B cell (primary cell): ENCODE measurements at regions of chr21 and their contacts with region 1.

Region 1: GRCh38 chr21:44011980-44012527 is at the start of gene TRAPPC10:
- DNase-seq: peak; percentile 90
- ATAC-seq: peak; percentile 63
- H3K4me3 ChIP-seq: peak within 1 kb of the TSS; percentile 53 to 86 (median 75)
- H3K4me3 Mint-ChIP-seq: peak within 1 kb of the TSS; percentile 92
- H3K27ac ChIP-seq: peak within 1 kb of the TSS; percentile 76 to 92
- H3K27ac Mint-ChIP-seq: peak within 1 kb of the TSS; percentile 95
- H3K4me1 ChIP-seq: peaks cover 35 to 42% of the 10 kb centered on the region in 2 donors
- H3K4me1 Mint-ChIP-seq: peaks cover 40% of the 10 kb centered on the region
- H3K27me3 ChIP-seq: no peaks in the 10 kb centered on the region
- H3K27me3 Mint-ChIP-seq: no peaks in the 10 kb centered on the region
- CTCF ChIP-seq: no peak
- total RNA-seq, gene TRAPPC10: 145 and 153 TPM in 2 replicates

Region 2: GRCh38 chr21:42892931-42893755 is 1118.9 kb before region 1 on chr21 and contains the start of gene NDUFV3:
- CTCF ChIA-PET with region 1: no interaction called
- POLR2A ChIA-PET with region 1: no interaction called
- intact Hi-C with region 1: loop called (anchors 5 kb)
- DNase-seq: peak; percentile 100
- ATAC-seq: peak; percentile 97
- H3K4me3 ChIP-seq: peak within 1 kb of the TSS; percentile 68 to 83 (median 70)
- H3K4me3 Mint-ChIP-seq: peak within 1 kb of the TSS; percentile 94
- H3K27ac ChIP-seq: peak within 1 kb of the TSS; percentile 80 to 96
- H3K27ac Mint-ChIP-seq: peak within 1 kb of the TSS; percentile 95
- H3K4me1 ChIP-seq: peaks cover 7 to 11% of the 10 kb centered on the region in 2 donors
- H3K4me1 Mint-ChIP-seq: peaks cover 10% of the 10 kb centered on the region
- H3K27me3 ChIP-seq: no peaks in the 10 kb centered on the region
- H3K27me3 Mint-ChIP-seq: no peaks in the 10 kb centered on the region
- CTCF ChIP-seq: no peak
- total RNA-seq, gene NDUFV3: 29.7 and 30.8 TPM in 2 replicates

Region 3: DNA sequence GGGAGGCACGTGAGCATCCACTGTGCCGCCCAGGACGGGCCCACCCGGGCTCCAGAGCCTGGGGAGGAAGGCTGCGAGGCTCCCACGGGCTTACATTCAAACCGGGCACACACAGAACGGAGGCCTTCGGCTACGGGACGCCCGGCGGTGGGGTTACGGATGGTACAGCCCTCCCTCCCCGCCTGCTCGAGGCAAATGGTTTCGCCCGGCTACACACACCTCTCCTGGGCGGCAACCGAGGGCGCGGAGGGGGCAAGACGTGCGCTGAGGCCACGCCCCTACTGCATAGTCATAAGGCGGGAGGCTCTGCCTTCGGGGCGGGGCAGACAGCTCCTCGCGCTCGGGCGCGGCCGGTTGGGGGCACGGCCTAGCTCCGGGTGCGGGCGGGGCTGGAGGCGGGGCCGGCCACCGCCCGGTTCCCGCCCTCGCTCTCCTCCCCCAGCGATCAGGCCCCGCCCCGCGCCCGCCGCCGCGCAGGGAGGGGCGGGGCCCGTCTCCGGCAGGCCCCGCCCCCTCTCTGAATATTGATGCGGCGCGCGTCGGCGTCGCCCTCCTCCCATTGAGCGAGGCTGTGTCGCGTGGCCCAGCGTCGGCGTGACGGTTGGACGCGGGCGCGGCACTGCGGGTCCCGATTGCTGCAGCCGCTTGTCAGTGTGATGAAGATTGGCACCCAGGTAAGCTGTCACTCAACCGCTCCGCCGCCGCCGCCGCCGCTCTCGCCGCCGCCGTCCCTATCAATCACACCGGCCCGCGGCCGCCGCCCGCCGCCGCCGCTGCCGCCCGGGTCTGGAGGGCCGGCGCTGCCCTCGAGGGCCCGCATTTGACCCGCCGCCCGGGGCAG is 1037.8 kb before region 1 on chr21 and contains the start of gene PKNOX1:
- CTCF ChIA-PET with region 1: no interaction called
- POLR2A ChIA-PET with region 1: no interaction called
- intact Hi-C with region 1: loop called (anchors 5 kb)
- DNase-seq: peak; percentile 100
- ATAC-seq: peak; percentile 84
- H3K4me3 ChIP-seq: peak within 1 kb of the TSS; percentile 39 to 84 (median 69)
- H3K4me3 Mint-ChIP-seq: peak within 1 kb of the TSS; percentile 92
- H3K27ac ChIP-seq: peak within 1 kb of the TSS; percentile 76 to 87
- H3K27ac Mint-ChIP-seq: peak within 1 kb of the TSS; percentile 98
- H3K4me1 ChIP-seq: peaks cover 14 to 18% of the 10 kb centered on the region in 2 donors
- H3K4me1 Mint-ChIP-seq: peaks cover 19% of the 10 kb centered on the region
- H3K27me3 ChIP-seq: no peaks in the 10 kb centered on the region
- H3K27me3 Mint-ChIP-seq: no peaks in the 10 kb centered on the region
- CTCF ChIP-seq: no peak
- total RNA-seq, gene PKNOX1: 25.3 and 29.5 TPM in 2 replicates

Region 4: DNA sequence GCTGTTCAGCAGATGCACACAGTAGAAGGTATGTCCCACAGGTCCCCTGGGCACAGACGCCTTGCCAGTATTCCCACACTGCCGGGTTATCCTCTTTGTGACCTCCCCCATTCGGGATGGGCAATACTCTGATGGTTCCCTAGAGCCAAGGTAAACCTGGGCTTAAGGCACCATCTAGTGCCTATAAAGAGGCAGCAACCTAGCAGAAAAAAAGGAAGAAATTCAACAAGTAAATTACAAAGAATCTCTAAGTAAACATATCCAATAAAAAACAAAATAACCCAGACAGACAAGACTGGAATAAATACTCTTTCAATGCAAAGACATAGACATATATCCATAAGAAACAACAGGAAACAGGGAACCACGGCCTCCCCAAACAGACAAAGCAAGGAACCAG is 392.2 kb before region 1 on chr21:
- CTCF ChIA-PET with region 1: no interaction called
- POLR2A ChIA-PET with region 1: no interaction called
- intact Hi-C with region 1: no loop called
- DNase-seq: no peak
- ATAC-seq: no peak
- H3K4me3 ChIP-seq: no peak overlapping the region
- H3K4me3 Mint-ChIP-seq: no peak overlapping the region
- H3K27ac ChIP-seq: no peak overlapping the region
- H3K27ac Mint-ChIP-seq: no peak overlapping the region
- H3K4me1 ChIP-seq: peaks cover 5% of the 10 kb centered on the region in 2 donors
- H3K4me1 Mint-ChIP-seq: peaks cover 20% of the 10 kb centered on the region
- H3K27me3 ChIP-seq: no peaks in the 10 kb centered on the region
- H3K27me3 Mint-ChIP-seq: peaks cover 5% of the 10 kb centered on the region
- CTCF ChIP-seq: no peak

Region 5: DNA sequence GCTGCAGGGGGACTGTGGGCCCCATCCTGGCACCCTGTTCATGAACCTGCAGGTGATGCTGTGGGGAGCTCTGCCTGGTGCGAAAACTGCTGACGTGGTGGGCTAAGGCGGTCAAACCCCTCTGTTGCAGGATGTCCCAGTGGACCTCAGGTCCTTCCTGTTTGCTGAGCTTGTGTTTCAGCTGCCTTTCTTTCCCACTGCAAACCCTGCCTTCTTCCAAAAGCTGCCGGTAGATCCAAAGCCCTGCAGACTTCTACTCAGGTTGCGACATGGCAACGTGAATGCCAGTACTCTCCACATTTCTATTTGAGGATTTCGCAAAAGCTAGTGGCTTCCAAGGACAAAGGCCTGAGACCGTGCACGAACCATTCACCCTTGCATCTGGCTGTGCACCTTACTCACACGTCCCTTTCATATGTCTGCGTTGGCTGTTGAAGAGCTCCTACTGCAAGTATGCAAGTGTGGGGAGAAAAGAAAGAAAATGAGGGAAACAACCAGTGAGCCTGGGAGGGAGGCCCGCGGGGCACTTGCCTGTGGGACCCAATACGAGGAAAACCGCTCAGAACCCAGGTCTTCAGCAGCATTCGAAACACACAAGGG is 228.9 kb before region 1 on chr21:
- CTCF ChIA-PET with region 1: no interaction called
- POLR2A ChIA-PET with region 1: no interaction called
- intact Hi-C with region 1: no loop called
- DNase-seq: no peak
- ATAC-seq: no peak
- H3K4me3 ChIP-seq: no peak overlapping the region
- H3K4me3 Mint-ChIP-seq: no peak overlapping the region
- H3K27ac ChIP-seq: no peak overlapping the region
- H3K27ac Mint-ChIP-seq: no peak overlapping the region
- H3K4me1 ChIP-seq: peaks cover 3 to 6% of the 10 kb centered on the region in 2 donors
- H3K4me1 Mint-ChIP-seq: peaks cover 6% of the 10 kb centered on the region
- H3K27me3 ChIP-seq: no peaks in the 10 kb centered on the region
- H3K27me3 Mint-ChIP-seq: no peaks in the 10 kb centered on the region
- CTCF ChIP-seq: no peak

Region 6: DNA sequence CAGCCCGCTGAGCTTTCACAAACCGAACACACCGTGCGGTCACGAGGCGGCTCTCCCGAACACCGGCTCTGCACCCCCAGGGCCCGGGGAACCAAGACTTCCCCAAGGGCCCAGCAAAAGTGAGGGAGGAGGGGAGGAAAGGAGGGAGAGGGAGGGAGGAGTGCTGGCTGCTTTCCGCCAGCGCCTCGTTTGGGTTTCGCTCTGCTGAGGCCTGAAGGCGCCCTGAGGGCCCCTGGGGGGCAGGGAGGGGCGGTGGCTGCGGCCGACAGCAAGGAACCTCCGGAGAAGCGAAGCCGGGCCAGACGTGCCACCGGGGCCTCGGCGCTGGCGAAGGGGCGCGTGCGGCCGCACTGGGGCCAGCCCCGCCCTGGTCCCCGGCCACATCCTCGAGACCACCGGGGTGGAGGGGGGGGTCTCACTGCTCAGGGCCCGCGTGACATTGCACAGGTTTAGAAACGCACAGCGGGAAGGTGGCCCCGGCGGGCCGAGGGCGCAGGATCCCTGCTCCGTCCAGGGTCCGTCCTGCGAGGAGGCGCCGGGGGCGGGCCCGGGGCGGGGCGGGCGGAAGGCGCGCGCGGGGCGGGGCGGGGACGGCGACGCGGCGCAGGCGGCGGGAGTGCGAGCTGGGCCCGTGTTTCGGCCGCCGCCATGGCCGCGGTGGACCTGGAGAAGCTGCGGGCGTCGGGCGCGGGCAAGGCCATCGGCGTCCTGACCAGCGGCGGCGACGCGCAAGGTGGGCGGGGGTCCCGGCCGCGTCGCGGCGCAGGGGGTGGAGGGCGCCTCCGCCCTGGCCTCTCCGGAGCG is 287.6 kb after region 1 on chr21 and contains the start of gene PFKL:
- CTCF ChIA-PET with region 1: interaction called, 11 read pairs
- POLR2A ChIA-PET with region 1: interaction called, 9 read pairs
- intact Hi-C with region 1: loop called (anchors 10 kb)
- DNase-seq: peak; percentile 90
- ATAC-seq: peak; percentile 72
- H3K4me3 ChIP-seq: peak within 1 kb of the TSS; percentile 0 to 82 (median 72)
- H3K4me3 Mint-ChIP-seq: peak within 1 kb of the TSS; percentile 91
- H3K27ac ChIP-seq: peak within 1 kb of the TSS; percentile 91 to 94
- H3K27ac Mint-ChIP-seq: peak within 1 kb of the TSS; percentile 97
- H3K4me1 ChIP-seq: peaks cover 72 to 88% of the 10 kb centered on the region in 2 donors
- H3K4me1 Mint-ChIP-seq: peaks cover 67% of the 10 kb centered on the region
- H3K27me3 ChIP-seq: no peaks in the 10 kb centered on the region
- H3K27me3 Mint-ChIP-seq: no peaks in the 10 kb centered on the region
- CTCF ChIP-seq: no peak
- total RNA-seq, gene PFKL: 318 and 329 TPM in 2 replicates

Region 7: DNA sequence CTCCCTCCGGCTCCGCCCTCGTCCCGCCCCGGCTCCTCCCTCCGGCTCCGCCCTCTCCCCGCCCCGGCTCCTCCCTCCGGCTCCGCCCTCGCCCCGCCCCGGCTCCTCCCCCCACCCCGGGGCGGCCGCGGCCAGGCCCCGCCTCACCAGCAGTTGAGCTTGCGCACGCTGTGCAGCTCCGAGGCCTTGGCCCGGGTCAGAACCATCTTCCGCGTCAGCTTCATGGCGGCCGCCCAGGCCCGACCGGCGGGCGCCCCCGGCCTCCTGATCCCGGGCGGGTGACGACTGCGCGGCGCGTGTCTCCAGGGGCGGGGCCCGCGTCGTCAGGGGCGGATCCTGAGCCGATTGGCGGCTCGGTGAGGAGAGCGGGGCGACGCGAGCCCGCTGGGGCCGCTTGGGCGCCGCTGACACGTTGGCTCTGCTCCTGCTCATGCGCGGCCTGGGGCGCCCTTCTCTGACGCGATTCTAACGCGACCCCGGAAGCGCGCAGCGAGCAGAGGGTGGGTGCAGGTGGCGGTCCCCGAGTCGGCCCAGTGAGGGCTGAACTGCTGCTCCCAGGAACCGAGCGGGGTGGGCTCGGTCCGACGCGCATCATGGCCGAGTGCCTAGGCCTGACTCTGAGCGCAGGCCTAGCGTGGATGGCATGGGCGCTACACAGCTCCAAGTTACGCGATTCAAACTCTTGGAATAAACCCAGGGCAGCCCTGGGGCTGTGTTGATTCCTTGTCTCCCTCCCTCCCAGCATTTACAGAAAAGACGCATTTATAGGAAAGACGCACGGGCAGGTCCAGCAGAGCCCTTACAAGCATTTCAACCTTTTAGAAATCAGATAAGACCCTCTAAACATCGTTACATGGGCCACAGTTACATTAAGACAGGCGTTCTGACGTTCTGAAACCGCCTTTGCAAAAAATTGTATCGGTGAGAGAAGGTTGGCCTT is 327.2 kb after region 1 on chr21 and contains the start of gene CFAP410:
- CTCF ChIA-PET with region 1: no interaction called
- POLR2A ChIA-PET with region 1: no interaction called
- intact Hi-C with region 1: loop called (anchors 5 kb)
- DNase-seq: peak; percentile 97
- ATAC-seq: peak; percentile 85
- H3K4me3 ChIP-seq: peak within 1 kb of the TSS; percentile 73 to 99 (median 88)
- H3K4me3 Mint-ChIP-seq: peak within 1 kb of the TSS; percentile 92
- H3K27ac ChIP-seq: peak within 1 kb of the TSS; percentile 89 to 97
- H3K27ac Mint-ChIP-seq: peak within 1 kb of the TSS; percentile 97
- H3K4me1 ChIP-seq: peaks cover 10 to 18% of the 10 kb centered on the region in 2 donors
- H3K4me1 Mint-ChIP-seq: peaks cover 17% of the 10 kb centered on the region
- H3K27me3 ChIP-seq: no peaks in the 10 kb centered on the region
- H3K27me3 Mint-ChIP-seq: no peaks in the 10 kb centered on the region
- CTCF ChIP-seq: no peak
- total RNA-seq, gene CFAP410: 62.4 and 69.2 TPM in 2 replicates

Region 8: GRCh38 chr21:44873356-44874239 is 861.5 kb after region 1 on chr21 and contains the start of gene PTTG1IP:
- CTCF ChIA-PET with region 1: no interaction called
- POLR2A ChIA-PET with region 1: no interaction called
- intact Hi-C with region 1: loop called (anchors 10 kb)
- DNase-seq: peak; percentile 99
- ATAC-seq: peak; percentile 83
- H3K4me3 ChIP-seq: peak within 1 kb of the TSS; percentile 73 to 92 (median 81)
- H3K4me3 Mint-ChIP-seq: peak within 1 kb of the TSS; percentile 92
- H3K27ac ChIP-seq: peak within 1 kb of the TSS; percentile 80 to 93
- H3K27ac Mint-ChIP-seq: peak within 1 kb of the TSS; percentile 98
- H3K4me1 ChIP-seq: peaks cover 50 to 56% of the 10 kb centered on the region in 2 donors
- H3K4me1 Mint-ChIP-seq: peaks cover 60% of the 10 kb centered on the region
- H3K27me3 ChIP-seq: no peaks in the 10 kb centered on the region
- H3K27me3 Mint-ChIP-seq: no peaks in the 10 kb centered on the region
- CTCF ChIP-seq: no peak
- total RNA-seq, gene PTTG1IP: 58.6 and 62.9 TPM in 2 replicates